A673 (cell line): ENCODE measurements at regions of chr1 and their contacts with region 1.

Region 1: DNA sequence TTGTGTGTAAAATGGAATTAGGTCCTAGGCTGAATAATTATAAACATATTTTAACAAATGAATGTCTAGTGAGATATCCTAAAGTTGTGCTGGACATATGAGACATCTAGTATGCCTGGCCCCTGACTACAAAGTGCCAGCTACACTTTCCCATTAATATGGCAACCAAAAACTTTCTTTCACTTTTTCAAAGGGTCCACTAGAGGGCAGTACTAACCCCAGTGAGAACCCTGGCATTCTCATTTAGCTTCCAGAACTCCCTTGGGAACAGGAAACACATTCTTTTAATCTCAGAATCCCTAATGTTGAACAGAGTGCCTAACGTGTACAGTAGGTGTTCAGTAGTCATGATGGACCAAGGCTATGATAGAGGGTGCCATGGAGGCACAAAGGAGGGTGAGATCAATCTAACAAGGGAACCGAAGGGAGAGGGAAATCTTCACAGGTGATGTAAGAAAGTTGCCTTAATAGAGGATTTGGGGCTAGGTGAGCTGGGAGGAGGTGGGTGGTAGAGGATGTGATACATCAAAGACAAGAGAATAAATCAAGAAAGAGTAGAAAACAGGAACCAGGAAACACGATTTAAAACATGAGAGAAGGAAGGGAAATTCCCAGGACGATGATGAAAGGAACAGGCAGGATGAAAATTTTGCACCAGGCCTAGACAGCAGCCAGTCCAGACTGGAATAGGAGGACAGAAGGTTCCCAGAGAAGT is 41.6 kb downstream of the NSL1 start:
- DNase-seq: peak; percentile 89
- H3K4me3 ChIP-seq: no peak overlapping the region
- H3K27ac ChIP-seq: no peak overlapping the region
- H3K4me1 ChIP-seq: peaks cover 14% of the 10 kb centered on the region
- H3K27me3 ChIP-seq: no peaks in the 10 kb centered on the region
- CTCF ChIP-seq: peak; percentile 88

Region 2: GRCh38 chr1:212760126-212760823 is 10.3 kb after region 1 on chr1:
- CTCF ChIA-PET with region 1: no interaction called
- POLR2A ChIA-PET with region 1: interaction called, 16 read pairs
- intact Hi-C with region 1: no loop called
- DNase-seq: peak; percentile 52
- H3K4me3 ChIP-seq: no peak overlapping the region
- H3K27ac ChIP-seq: no peak overlapping the region
- H3K4me1 ChIP-seq: no peaks in the 10 kb centered on the region
- H3K27me3 ChIP-seq: no peaks in the 10 kb centered on the region
- CTCF ChIP-seq: peak; percentile 65

Region 3: DNA sequence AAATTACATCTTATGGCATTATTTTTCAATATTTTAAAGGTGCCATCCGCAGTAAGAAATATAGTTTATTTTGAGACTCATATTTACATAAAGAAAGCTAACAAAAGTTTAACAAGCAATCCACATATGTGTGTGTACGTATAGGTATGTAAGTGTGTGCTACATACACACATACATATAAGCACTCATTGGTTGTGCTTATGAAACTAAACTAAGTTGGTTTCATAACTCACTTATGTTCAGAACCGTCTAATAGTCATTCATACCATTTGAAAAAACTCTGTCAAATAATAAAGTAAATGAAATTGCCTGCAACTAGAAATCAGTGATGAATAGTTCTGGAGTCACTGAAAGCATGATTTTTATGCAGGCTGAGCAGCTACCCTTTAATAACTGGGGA is 55.8 kb after region 1 on chr1:
- CTCF ChIA-PET with region 1: no interaction called
- POLR2A ChIA-PET with region 1: no interaction called
- intact Hi-C with region 1: no loop called
- DNase-seq: no peak
- H3K4me3 ChIP-seq: no peak overlapping the region
- H3K27ac ChIP-seq: no peak overlapping the region
- H3K4me1 ChIP-seq: no peaks in the 10 kb centered on the region
- H3K27me3 ChIP-seq: no peaks in the 10 kb centered on the region
- CTCF ChIP-seq: no peak